Aorta (tissue), 5 donors: ENCODE measurements at regions of chr15 and their contacts with region 1.

Region 1: GRCh38 chr15:25022233-25022632 is 67.4 kb downstream of the SNRPN start:
- DNase-seq: no peak
- ATAC-seq: no peak
- H3K4me3 ChIP-seq: no peak overlapping the region
- H3K27ac ChIP-seq: no peak overlapping the region
- H3K4me1 ChIP-seq: no peaks in the 10 kb centered on the region
- H3K27me3 ChIP-seq: no peaks in the 10 kb centered on the region

Region 2: GRCh38 chr15:25092661-25093060 is 70.4 kb after region 1 on chr15:
- intact Hi-C with region 1: loop called in 1 of 2 experiments (anchors 10 kb)
- DNase-seq: no peak
- ATAC-seq: no peak
- H3K4me3 ChIP-seq: no peak overlapping the region
- H3K27ac ChIP-seq: no peak overlapping the region
- H3K4me1 ChIP-seq: no peaks in the 10 kb centered on the region
- H3K27me3 ChIP-seq: no peaks in the 10 kb centered on the region

Region 3: DNA sequence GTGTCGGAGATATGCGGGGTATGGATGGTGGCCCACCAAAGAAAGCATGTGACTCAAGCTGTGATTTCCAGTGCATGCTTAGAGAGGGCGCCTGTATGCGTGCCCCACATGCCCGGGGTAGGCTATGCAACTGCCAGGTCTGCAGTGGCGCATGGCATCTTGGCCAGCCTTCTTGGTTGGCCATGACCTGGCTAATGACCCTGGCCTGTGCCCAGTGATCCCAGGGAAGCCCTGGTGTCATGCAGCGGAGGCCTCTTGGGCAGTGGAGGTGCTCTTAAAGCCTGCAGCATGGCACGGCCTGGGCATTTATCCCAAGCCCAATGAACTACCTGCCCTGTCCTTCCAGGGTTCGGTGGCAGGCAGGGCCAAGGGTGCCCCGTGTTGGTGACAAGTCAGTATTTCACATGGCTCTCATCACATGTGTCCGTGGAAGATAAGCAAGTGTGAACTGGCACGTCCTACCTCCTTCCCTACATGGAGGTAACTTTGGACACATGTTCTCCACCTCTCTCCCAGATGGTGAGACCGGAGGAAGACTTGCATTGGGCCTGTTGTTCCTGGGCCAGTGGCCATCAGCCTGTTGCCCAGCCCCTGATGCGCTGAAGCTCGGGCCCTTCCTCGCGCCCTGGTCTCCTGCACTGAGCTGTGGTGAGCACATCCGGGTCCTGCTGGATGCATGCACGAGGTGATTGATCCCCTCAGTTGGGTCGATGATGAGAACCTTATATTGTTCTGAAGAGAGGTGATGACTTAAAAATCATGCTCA is 224.6 kb after region 1 on chr15:
- intact Hi-C with region 1: no loop called
- DNase-seq: peak; percentile 25 to 67
- ATAC-seq: no peak
- H3K4me3 ChIP-seq: no peak overlapping the region
- H3K27ac ChIP-seq: no peak overlapping the region
- H3K4me1 ChIP-seq: no peaks in the 10 kb centered on the region
- H3K27me3 ChIP-seq: no peaks in the 10 kb centered on the region